ENCODE measurements at regions of chr6 and their contacts with region 1.

Region 1: GRCh38 chr6:159174263-159174969 is 5.2 kb downstream of the FNDC1 start:
- DNase-seq: peak; percentile 79
- ATAC-seq: peak; percentile 71
- H3K4me3 ChIP-seq: peak overlapping the region in 3 of 5 experiments; percentile 16 to 49 (median 34)
- H3K4me3 Mint-ChIP-seq: peak overlapping the region; percentile 11
- H3K27ac ChIP-seq: no peak overlapping the region
- H3K27ac Mint-ChIP-seq: no peak overlapping the region
- H3K4me1 ChIP-seq: peaks cover 14 to 15% of the 10 kb centered on the region in 2 donors
- H3K4me1 Mint-ChIP-seq: peaks cover 17% of the 10 kb centered on the region
- H3K27me3 ChIP-seq: peaks cover 0 to 48% (median 37%) of the 10 kb centered on the region in 4 experiments
- H3K27me3 Mint-ChIP-seq: peaks cover 69% of the 10 kb centered on the region
- CTCF ChIP-seq: peak; percentile 97

Region 2: GRCh38 chr6:159100395-159101182 is 73.8 kb before region 1 on chr6:
- CTCF ChIA-PET with region 1: no interaction called
- POLR2A ChIA-PET with region 1: no interaction called
- intact Hi-C with region 1: no loop called
- DNase-seq: no peak
- ATAC-seq: no peak
- H3K4me3 ChIP-seq: no peak overlapping the region
- H3K4me3 Mint-ChIP-seq: peak overlapping the region; percentile 37
- H3K27ac ChIP-seq: no peak overlapping the region
- H3K27ac Mint-ChIP-seq: peak overlapping the region; percentile 78
- H3K4me1 ChIP-seq: peaks cover 81 to 88% of the 10 kb centered on the region in 2 donors
- H3K4me1 Mint-ChIP-seq: peaks cover 92% of the 10 kb centered on the region
- H3K27me3 ChIP-seq: no peaks in the 10 kb centered on the region
- H3K27me3 Mint-ChIP-seq: no peaks in the 10 kb centered on the region
- CTCF ChIP-seq: no peak

Region 3: GRCh38 chr6:159184559-159184958 is 10.1 kb after region 1 on chr6:
- CTCF ChIA-PET with region 1: interaction called, 11 read pairs
- POLR2A ChIA-PET with region 1: no interaction called
- intact Hi-C with region 1: no loop called
- DNase-seq: no peak
- ATAC-seq: no peak
- H3K4me3 ChIP-seq: no peak overlapping the region
- H3K4me3 Mint-ChIP-seq: no peak overlapping the region
- H3K27ac ChIP-seq: no peak overlapping the region
- H3K27ac Mint-ChIP-seq: no peak overlapping the region
- H3K4me1 ChIP-seq: no peaks in the 10 kb centered on the region
- H3K4me1 Mint-ChIP-seq: peaks cover 2% of the 10 kb centered on the region
- H3K27me3 ChIP-seq: peaks cover 0 to 9% (median 1%) of the 10 kb centered on the region in 4 experiments
- H3K27me3 Mint-ChIP-seq: peaks cover 14% of the 10 kb centered on the region
- CTCF ChIP-seq: no peak

Region 4: GRCh38 chr6:159577564-159577963 is 403.1 kb after region 1 on chr6:
- CTCF ChIA-PET with region 1: no interaction called
- POLR2A ChIA-PET with region 1: no interaction called
- intact Hi-C with region 1: no loop called
- DNase-seq: no peak
- ATAC-seq: no peak
- H3K4me3 ChIP-seq: no peak overlapping the region
- H3K4me3 Mint-ChIP-seq: no peak overlapping the region
- H3K27ac ChIP-seq: no peak overlapping the region
- H3K27ac Mint-ChIP-seq: no peak overlapping the region
- H3K4me1 ChIP-seq: no peaks in the 10 kb centered on the region
- H3K4me1 Mint-ChIP-seq: no peaks in the 10 kb centered on the region
- H3K27me3 ChIP-seq: peaks cover 0 to 9% (median 1%) of the 10 kb centered on the region in 4 experiments
- H3K27me3 Mint-ChIP-seq: peaks cover 40% of the 10 kb centered on the region
- CTCF ChIP-seq: no peak

Region 5: DNA sequence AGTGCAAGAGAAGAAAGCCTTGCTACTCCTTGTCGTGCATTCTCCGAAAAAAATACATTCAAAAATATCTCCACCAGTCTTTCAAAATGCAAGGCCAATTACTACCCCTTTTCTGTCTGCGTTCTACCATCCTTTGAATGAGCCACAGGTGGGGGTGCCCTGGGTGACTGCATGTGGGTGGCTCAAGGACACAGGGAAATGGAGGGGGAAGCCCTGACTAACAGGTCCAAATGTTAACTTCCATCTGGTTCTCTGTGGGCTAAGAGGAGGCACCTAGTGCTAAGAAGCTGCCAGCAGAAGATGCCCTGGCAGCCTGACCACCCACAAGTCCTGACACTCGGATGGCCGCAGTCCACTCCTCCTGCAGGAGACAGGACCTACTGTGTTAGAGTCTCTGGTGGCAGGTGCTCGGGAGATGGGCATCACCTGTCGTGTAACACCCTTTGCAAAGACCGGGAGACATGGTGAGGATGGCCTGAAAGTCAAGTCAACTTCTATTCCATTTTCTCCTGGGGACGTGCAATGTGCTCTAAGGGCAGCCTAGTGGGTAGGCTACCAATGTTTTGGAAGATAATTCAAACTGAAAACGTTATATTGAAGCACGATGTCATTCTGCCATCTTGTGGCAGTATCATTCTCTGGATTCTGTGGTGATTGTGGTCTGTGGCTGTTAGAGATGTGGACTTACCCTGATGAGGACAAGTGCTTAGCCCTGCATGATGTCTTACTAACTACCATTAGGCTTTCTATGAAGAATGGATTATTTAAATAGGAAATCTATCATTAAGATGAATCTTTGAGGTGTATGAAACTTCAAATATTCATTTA is 767.1 kb after region 1 on chr6:
- CTCF ChIA-PET with region 1: interaction called, 3 read pairs
- POLR2A ChIA-PET with region 1: no interaction called
- intact Hi-C with region 1: loop called (anchors 10 kb)
- DNase-seq: peak; percentile 51
- ATAC-seq: peak; percentile 31
- H3K4me3 ChIP-seq: no peak overlapping the region
- H3K4me3 Mint-ChIP-seq: no peak overlapping the region
- H3K27ac ChIP-seq: no peak overlapping the region
- H3K27ac Mint-ChIP-seq: no peak overlapping the region
- H3K4me1 ChIP-seq: no peaks in the 10 kb centered on the region
- H3K4me1 Mint-ChIP-seq: no peaks in the 10 kb centered on the region
- H3K27me3 ChIP-seq: peaks cover 0 to 2% (median 0%) of the 10 kb centered on the region in 4 experiments
- H3K27me3 Mint-ChIP-seq: peaks cover 15% of the 10 kb centered on the region
- CTCF ChIP-seq: peak; percentile 22

Measured in B cell (primary cell).